Brain microvascular endothelial cell (primary cell): ENCODE measurements at regions of chr2 and their contacts with region 1.

Region 1: DNA sequence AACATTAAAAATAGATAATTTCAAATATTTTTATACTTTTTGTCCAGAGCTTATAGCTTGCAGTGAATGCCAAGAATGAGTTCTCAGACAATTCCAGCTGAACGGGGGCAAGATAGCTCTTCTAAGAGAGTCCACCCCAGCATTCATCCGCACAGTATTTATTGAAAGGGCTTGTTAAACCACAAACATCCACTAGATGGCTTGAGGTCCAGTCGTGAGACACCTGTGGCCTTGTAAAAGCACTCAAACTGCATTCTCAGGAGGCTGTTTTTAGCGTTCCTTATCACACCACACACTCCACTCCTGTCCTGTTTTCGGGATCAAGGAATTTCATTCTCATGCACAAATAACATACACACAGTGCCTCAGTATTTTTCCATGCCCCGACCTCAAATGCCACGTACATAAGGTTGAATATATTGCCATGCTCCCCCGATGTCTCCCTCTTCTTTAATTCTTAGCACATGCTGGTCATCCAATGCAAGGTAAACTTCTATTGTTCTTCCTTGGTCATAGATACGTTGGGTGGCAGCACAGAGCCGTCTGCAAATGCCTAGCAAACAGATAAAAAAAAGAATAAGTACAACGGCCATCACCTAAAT is 47.4 kb downstream of the DNAJC10 start:
- DNase-seq: peak; percentile 55
- H3K4me3 ChIP-seq: no peak overlapping the region
- H3K27ac ChIP-seq: no peak overlapping the region
- H3K27me3 ChIP-seq: no peaks in the 10 kb centered on the region
- CTCF ChIP-seq: peak; percentile 72

Region 2: GRCh38 chr2:182530636-182531035 is 232.8 kb before region 1 on chr2:
- in situ Hi-C with region 1: no loop called
- DNase-seq: no peak
- H3K4me3 ChIP-seq: no peak overlapping the region
- H3K27ac ChIP-seq: no peak overlapping the region
- H3K27me3 ChIP-seq: no peaks in the 10 kb centered on the region
- CTCF ChIP-seq: no peak

Region 3: GRCh38 chr2:182845794-182846417 is 82.5 kb after region 1 on chr2:
- in situ Hi-C with region 1: no loop called
- DNase-seq: no peak
- H3K4me3 ChIP-seq: no peak overlapping the region
- H3K27ac ChIP-seq: no peak overlapping the region
- H3K27me3 ChIP-seq: no peaks in the 10 kb centered on the region
- CTCF ChIP-seq: no peak

Region 4: GRCh38 chr2:182994228-182994912 is 231.0 kb after region 1 on chr2:
- in situ Hi-C with region 1: no loop called
- DNase-seq: no peak
- H3K4me3 ChIP-seq: no peak overlapping the region
- H3K27ac ChIP-seq: no peak overlapping the region
- H3K27me3 ChIP-seq: no peaks in the 10 kb centered on the region
- CTCF ChIP-seq: no peak

Region 5: DNA sequence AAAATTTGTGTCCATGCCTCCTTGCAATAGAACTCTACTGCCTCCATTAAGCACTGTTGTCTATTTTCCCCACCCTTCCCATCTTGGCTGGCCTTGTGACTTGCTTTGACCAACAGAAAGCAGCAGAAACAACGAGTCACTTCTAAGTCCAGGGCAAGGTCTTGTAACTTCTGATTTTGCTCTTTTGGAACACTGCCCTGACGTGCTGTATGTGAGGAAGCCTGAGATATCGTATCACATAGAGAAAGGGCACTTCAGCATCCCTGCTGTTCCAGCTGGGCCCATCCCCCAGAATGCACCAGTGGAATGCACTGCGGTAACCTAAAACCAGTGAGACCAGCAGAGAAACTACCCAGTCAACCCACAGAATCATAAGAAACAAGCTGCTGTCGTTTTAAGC is 246.7 kb after region 1 on chr2:
- in situ Hi-C with region 1: loop called (anchors 25 kb)
- DNase-seq: peak; percentile 94
- H3K4me3 ChIP-seq: no peak overlapping the region
- H3K27ac ChIP-seq: peak overlapping the region; percentile 13
- H3K27me3 ChIP-seq: no peaks in the 10 kb centered on the region
- CTCF ChIP-seq: no peak